ENCODE measurements at regions of chr2 and their contacts with region 1.

Region 1: DNA sequence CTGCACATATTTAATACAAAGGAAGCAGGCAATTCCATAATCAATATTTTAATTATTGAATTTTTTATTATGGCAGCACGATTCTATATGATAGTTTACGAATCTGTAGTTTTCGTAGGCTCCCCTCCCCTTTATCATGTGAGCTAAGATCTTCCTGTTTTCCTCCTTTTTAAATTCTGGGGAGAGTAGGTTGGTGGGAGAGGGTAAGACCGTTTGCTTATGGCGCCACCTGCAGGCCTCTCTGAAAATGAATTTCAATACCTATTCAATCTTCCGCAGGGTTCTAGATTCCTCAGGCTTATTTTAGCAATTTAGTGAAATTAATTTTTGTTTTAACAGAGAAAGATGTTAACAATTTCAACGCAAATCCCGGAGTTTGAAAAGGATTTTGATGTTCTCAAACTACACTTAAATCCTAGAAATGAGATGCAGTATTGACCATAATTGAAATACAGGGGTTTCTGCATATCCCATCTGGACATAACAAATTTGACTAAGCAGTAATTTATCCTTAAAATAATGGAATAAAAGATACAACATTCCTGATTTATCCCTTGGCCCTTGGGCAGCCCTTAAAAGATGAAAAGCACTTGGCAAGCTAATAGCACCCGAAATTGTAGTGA is 12.8 kb upstream of the GBX2 start:
- DNase-seq: peak; percentile 55
- H3K4me3 Mint-ChIP-seq: no peak overlapping the region
- H3K27ac Mint-ChIP-seq: no peak overlapping the region
- H3K4me1 Mint-ChIP-seq: peaks cover 7% of the 10 kb centered on the region
- H3K27me3 Mint-ChIP-seq: peaks cover 67% of the 10 kb centered on the region

Region 2: GRCh38 chr2:235766278-235766677 is 414.7 kb before region 1 on chr2:
- CTCF ChIA-PET with region 1: interaction called, 10 read pairs
- DNase-seq: peak; percentile 63
- H3K4me3 Mint-ChIP-seq: no peak overlapping the region
- H3K27ac Mint-ChIP-seq: no peak overlapping the region
- H3K4me1 Mint-ChIP-seq: no peaks in the 10 kb centered on the region
- H3K27me3 Mint-ChIP-seq: no peaks in the 10 kb centered on the region

Region 3: DNA sequence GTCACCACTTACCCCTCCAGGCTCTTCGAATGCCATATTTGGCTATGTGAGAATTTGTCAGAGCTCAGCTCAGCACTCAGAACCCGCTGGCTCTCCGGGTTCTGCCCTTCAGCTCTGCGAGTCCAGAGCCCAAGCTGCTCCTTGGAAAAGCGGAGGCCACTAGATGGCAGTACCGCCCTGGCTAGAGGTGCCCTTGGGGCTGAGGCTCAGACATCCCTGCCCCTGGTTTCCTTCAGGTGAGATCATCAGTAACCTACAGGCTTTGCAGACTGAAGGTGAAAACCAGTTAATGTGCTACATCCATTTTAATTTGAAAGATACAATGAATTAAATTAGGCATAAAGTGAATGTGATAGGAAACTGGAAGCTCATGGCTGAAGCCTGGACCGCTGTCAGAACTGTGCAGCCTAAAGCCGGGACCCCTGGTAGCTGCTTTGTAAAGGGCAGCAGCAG is 401.5 kb before region 1 on chr2:
- CTCF ChIA-PET with region 1: interaction called, 16 read pairs
- DNase-seq: peak; percentile 76
- H3K4me3 Mint-ChIP-seq: no peak overlapping the region
- H3K27ac Mint-ChIP-seq: no peak overlapping the region
- H3K4me1 Mint-ChIP-seq: no peaks in the 10 kb centered on the region
- H3K27me3 Mint-ChIP-seq: peaks cover 12% of the 10 kb centered on the region

Region 4: GRCh38 chr2:236156095-236156859 is 24.7 kb before region 1 on chr2:
- CTCF ChIA-PET with region 1: no interaction called
- DNase-seq: no peak
- H3K4me3 Mint-ChIP-seq: no peak overlapping the region
- H3K27ac Mint-ChIP-seq: no peak overlapping the region
- H3K4me1 Mint-ChIP-seq: no peaks in the 10 kb centered on the region
- H3K27me3 Mint-ChIP-seq: peaks cover 47% of the 10 kb centered on the region

Measured in activated naive CD4-positive, alpha-beta T cell treated with anti-CD3 and anti-CD28 coated beads, Interleukin-2, amount 10 ng/mL, durations not matched to agents 7 days and 5 days (primary cell).